Activated T-helper 2 cell treated with anti-CD3 and anti-CD28 coated beads, Interferon-gamma antibody, Interleukin-2, Interleukin-4, amounts not matched to agents 10 μg/mL and 5 μg/mL and 100 μg/mL, durations not matched to agents 14 hours and 24 hours and 36 hours (primary cell): ENCODE measurements at regions of chr15 and their contacts with region 1.

Region 1: DNA sequence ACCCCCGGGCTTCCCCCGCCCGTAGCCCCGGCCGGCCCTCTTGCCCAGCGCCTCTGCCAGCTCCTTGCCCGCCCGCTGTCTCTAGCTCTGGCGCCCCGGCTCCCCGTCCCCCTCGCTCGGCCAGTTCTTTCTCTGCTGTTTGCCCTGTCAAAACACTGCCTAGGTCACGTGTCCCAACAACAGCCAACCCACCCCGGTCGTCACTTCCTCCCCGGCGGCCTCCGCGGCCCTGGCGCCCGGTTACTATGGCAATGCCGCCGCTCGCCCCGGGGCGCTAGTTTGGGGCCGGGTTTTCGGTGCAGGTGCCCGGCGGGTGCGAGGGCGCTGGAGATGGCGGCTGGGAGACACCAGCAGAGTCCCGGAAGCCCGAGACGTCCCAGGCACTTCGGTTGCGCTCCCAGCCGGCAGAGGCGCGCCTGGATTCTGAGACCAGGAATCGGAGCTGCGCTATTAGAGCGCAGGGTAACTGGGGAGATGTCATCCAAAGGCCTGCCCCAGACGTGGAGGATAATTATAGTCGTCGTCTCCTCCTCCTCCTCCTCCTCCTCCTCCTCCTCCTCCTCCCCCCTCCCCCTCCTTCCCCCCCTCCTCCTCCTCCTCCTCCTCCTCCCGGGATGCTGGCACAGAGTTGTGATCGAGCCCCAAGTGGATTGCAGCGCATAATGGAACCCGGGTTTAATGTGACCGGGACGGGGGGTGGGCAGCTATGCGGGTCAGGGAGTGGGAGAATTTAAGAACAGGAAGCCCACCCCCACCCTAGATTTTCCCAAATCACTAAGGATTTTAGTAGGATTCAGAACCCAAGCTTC is at the start of gene ATOSA:
- DNase-seq: peak; percentile 89
- H3K4me3 Mint-ChIP-seq: peak within 1 kb of the TSS; percentile 88
- H3K27ac Mint-ChIP-seq: peak within 1 kb of the TSS; percentile 98
- H3K4me1 Mint-ChIP-seq: peaks cover 38% of the 10 kb centered on the region
- H3K27me3 Mint-ChIP-seq: no peaks in the 10 kb centered on the region
- total RNA-seq, gene ATOSA: 14.4 TPM in 2 replicates

Region 2: DNA sequence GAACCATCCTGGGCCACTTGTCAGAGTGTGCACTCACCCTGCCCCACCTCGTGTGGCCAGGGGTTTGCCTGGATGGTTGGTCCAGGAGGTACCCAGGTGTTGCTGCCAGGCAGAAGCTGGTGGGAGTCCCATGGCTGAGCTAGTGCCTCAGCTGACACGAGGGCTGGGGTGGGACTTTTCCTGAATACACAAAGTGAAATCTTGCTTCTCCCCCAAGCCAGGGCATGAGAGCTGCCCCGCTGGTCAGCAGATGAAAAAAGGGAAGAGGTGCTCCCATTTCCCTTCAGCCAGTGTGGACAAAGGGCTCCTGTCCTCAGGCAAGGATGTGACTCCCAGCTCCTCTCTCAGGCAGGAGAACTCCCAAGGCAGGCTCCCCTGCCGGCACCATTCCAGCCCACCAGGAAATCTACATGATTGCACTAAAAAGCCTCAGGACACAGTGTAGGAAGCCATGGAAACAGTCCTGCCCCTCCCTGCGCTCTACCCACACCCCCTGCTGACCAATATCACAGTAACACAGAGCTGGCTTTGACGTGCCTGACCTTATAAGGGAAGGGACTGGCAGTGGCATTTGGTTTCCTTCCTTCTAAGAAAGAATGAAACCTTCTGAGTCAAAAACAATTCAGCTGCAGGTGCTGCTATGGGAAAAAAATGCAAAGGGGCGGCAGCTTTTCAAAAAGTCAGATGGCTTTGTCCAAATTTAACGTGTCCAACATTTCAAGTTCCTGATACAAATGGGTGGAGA is 417.8 kb before region 1 on chr15:
- intact Hi-C with region 1: loop called (anchors 1 kb)
- DNase-seq: peak; percentile 69
- H3K4me3 Mint-ChIP-seq: peak overlapping the region; percentile 51
- H3K27ac Mint-ChIP-seq: peak overlapping the region; percentile 84
- H3K4me1 Mint-ChIP-seq: peaks cover 42% of the 10 kb centered on the region
- H3K27me3 Mint-ChIP-seq: no peaks in the 10 kb centered on the region

Region 3: GRCh38 chr15:52481915-52482314 is 197.5 kb before region 1 on chr15:
- intact Hi-C with region 1: loop called (anchors 5 kb)
- DNase-seq: peak; percentile 64
- H3K4me3 Mint-ChIP-seq: peak overlapping the region; percentile 66
- H3K27ac Mint-ChIP-seq: peak overlapping the region; percentile 80
- H3K4me1 Mint-ChIP-seq: peaks cover 64% of the 10 kb centered on the region
- H3K27me3 Mint-ChIP-seq: no peaks in the 10 kb centered on the region

Region 4: GRCh38 chr15:52568601-52569256 is 110.7 kb before region 1 on chr15 and contains the start of gene ARPP19:
- intact Hi-C with region 1: loop called (anchors 1 kb)
- DNase-seq: peak; percentile 80
- H3K4me3 Mint-ChIP-seq: peak within 1 kb of the TSS; percentile 96
- H3K27ac Mint-ChIP-seq: peak within 1 kb of the TSS; percentile 99
- H3K4me1 Mint-ChIP-seq: peaks cover 30% of the 10 kb centered on the region
- H3K27me3 Mint-ChIP-seq: no peaks in the 10 kb centered on the region
- total RNA-seq, gene ARPP19: 178 and 182 TPM in 2 replicates

Region 5: GRCh38 chr15:52642386-52643361 is 36.8 kb before region 1 on chr15:
- intact Hi-C with region 1: no loop called
- DNase-seq: no peak
- H3K4me3 Mint-ChIP-seq: no peak overlapping the region
- H3K27ac Mint-ChIP-seq: no peak overlapping the region
- H3K4me1 Mint-ChIP-seq: peaks cover 16% of the 10 kb centered on the region
- H3K27me3 Mint-ChIP-seq: no peaks in the 10 kb centered on the region

Region 6: DNA sequence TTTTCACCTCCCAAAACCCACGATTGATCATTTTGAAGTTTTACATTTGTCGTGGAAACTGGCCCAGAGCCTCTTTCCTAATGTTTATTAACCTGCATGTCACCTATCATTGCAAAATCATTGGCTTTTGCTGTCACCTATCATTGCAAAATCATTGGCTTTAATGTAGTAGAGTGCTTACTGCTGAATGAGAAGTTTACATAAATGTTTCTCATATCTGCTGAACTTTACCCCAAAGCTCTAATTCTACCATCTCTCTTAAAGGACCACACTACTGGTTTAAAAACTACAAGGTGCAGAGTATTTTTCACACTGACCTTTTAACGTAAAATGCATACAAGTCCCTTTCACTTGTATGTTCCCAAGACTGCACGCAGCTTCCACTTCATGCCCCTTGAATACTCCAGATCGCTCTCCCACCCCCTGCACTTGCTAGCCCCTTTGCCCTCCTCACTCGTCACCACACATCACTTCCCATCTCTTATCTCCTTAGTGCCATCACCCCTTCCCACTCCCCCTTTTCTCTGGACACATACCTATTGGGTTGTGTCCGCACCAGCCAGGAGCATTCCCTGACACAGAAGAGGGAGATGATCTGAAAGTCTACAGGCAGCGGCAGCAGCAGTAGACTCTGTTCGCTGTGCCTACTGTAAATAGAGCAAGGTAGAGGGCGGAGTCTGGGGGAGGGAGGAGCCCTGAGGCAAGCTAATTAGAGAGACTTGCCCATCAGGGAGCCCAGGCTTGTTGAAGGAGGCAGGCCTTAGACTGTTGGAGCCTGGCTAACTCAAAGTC is 29.9 kb after region 1 on chr15:
- intact Hi-C with region 1: no loop called
- DNase-seq: no peak
- H3K4me3 Mint-ChIP-seq: no peak overlapping the region
- H3K27ac Mint-ChIP-seq: no peak overlapping the region
- H3K4me1 Mint-ChIP-seq: peaks cover 1% of the 10 kb centered on the region
- H3K27me3 Mint-ChIP-seq: peaks cover 19% of the 10 kb centered on the region

Region 7: DNA sequence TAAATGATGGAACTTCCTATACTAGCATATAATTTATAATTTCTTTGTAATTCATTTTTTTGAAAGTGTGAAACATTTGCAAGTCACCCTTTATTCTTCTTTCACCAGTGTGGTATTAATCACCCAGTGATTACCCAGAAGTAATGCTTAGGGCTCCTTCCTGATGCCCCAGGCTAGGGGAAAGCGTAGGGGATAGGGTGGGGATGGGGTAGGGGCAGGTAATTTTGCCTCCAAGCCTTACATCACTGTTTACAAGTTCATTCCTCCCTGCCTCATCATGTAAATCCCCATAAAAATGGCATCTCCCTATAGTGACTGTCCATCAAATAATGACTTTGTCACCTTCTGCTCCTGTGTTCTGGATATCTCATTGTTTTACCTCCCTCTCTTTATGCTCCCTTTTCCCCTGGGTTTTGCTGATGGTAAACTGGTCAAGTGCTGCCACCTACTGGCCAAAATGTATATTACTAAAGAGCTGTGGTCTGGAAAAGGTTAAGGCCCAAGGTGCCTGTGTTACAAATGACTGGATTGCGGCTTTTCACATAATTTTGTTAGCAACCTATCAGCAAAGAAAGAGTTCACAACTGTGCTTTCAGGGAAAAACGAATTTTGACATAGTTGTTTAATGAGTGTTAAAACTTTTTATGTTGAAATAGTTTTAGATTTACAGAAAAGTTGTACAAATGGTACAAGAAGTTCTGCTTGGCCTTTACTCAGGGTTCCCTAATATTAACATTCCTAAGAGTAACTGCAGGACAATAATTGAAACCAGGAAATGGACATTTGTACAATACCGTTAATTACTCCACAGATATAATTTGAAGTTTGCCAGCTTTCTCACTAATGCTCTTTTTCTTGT is 56.0 kb after region 1 on chr15:
- intact Hi-C with region 1: loop called (anchors 2 kb)
- DNase-seq: peak; percentile 64
- H3K4me3 Mint-ChIP-seq: no peak overlapping the region
- H3K27ac Mint-ChIP-seq: no peak overlapping the region
- H3K4me1 Mint-ChIP-seq: peaks cover 16% of the 10 kb centered on the region
- H3K27me3 Mint-ChIP-seq: peaks cover 16% of the 10 kb centered on the region